ENCODE measurements at regions of chr19 and their contacts with region 1.

Region 1: DNA sequence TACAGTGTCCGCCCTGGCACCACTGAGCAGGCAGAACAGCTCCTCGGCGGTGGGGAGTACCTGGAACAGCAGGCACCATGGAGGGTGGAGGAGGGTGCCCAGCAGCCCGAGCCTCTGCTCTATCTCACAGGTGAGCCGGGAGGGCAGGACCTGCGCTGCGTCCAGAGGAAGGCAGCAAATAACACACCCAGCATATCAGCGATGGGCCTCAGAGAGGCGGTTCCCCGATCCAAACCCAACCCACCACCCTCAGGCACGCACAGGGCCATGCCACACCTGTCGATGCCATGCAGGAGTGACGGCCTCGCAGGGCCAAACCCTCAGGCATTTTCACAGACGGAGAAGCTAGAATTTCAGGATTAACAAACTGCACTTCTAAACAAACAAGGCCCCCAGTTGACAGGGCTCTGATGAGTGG is 11.8 kb downstream of the PEPD start:
- DNase-seq: no peak
- ATAC-seq: no peak
- H3K4me3 Mint-ChIP-seq: no peak overlapping the region
- H3K27ac Mint-ChIP-seq: no peak overlapping the region
- H3K4me1 Mint-ChIP-seq: peaks cover 5% of the 10 kb centered on the region
- H3K27me3 Mint-ChIP-seq: no peaks in the 10 kb centered on the region

Region 2: DNA sequence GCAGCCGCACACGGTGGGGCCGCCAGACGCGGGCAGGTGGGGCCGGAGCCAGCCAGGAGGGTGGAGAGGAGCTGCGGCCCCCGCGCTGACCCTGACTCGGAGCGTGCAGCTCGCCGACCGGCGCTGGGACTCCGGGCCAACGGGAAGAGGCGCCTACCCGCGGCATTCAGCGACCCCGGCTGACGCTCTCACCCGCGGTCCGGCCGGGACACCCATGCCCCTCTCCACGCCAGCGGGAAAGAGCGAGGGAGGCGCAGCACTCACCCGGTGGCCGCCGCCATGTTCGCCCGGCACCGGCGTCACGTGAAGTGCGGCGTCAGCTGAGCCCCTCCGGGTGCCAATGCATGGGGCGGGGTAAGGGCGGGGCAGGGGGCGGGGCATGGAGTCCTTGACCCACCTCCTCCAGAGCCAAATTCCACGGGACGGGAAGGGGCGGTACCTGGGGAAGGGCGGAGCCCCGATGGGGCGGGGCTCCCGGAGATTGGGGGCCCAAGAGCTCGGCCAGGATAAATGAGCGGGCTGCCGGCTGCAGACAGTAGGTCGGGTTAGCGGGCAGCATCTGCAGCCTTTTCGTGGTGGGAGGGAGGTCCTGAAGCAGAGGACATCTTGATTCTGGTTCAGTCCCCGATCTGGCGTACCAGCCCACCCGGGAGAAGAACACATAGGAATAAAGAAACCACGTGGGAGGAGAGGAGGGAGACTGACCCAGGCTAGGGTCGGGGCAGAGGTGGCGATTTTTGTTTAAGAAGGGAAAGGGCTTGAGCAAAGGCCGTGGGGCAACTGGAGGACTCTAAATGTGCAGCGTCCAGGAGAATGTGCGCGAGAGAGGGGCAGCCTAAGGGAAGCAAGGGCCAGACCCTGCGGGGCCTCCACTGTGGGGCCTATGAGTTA is 11.9 kb after region 1 on chr19 and contains the start of gene PEPD:
- CTCF ChIA-PET with region 1: interaction called, 5 read pairs
- POLR2A ChIA-PET with region 1: interaction called, 11 read pairs
- DNase-seq: peak; percentile 89
- ATAC-seq: peak; percentile 92
- H3K4me3 Mint-ChIP-seq: peak within 1 kb of the TSS; percentile 83
- H3K27ac Mint-ChIP-seq: peak within 1 kb of the TSS; percentile 50
- H3K4me1 Mint-ChIP-seq: peaks cover 24% of the 10 kb centered on the region
- H3K27me3 Mint-ChIP-seq: peaks cover 2% of the 10 kb centered on the region
- total RNA-seq, gene PEPD: 27.9 to 30.5 TPM